Mammary epithelial cell (primary cell): ENCODE measurements at regions of chr5 and their contacts with region 1.

Region 1: GRCh38 chr5:176388444-176389134 is at the starts of genes HIGD2A and NOP16:
- DNase-seq: peak; percentile 98
- H3K4me3 ChIP-seq: peak within 1 kb of the TSS; percentile 67 to 79 (median 75)
- H3K27ac ChIP-seq: peak within 1 kb of the TSS; percentile 90
- H3K4me1 ChIP-seq: peaks cover 12% of the 10 kb centered on the region
- H3K27me3 ChIP-seq: no peaks in the 10 kb centered on the region
- CTCF ChIP-seq: no peak
- total RNA-seq, gene HIGD2A: 30.3 to 93.0 TPM
- total RNA-seq, gene NOP16: 8.7 to 61.4 TPM

Region 2: GRCh38 chr5:176361437-176362232 is 27.0 kb before region 1 on chr5 and contains the start of gene KIAA1191:
- CTCF ChIA-PET with region 1: no interaction called
- dilution Hi-C with region 1: no loop called
- in situ Hi-C with region 1: no loop called
- intact Hi-C with region 1: loop called (anchors 1 kb)
- DNase-seq: peak; percentile 86
- H3K4me3 ChIP-seq: peak within 1 kb of the TSS; percentile 80 to 100 (median 99)
- H3K27ac ChIP-seq: peak within 1 kb of the TSS; percentile 72
- H3K4me1 ChIP-seq: peaks cover 30% of the 10 kb centered on the region
- H3K27me3 ChIP-seq: no peaks in the 10 kb centered on the region
- CTCF ChIP-seq: peak in 1 of 2 donors; percentile 44
- total RNA-seq, gene KIAA1191: 99.0 to 204 TPM

Region 3: GRCh38 chr5:176410486-176411180 is 22.0 kb after region 1 on chr5:
- CTCF ChIA-PET with region 1: no interaction called
- dilution Hi-C with region 1: no loop called
- in situ Hi-C with region 1: no loop called
- intact Hi-C with region 1: loop called (anchors 1 kb)
- DNase-seq: peak; percentile 68
- H3K4me3 ChIP-seq: no peak overlapping the region
- H3K27ac ChIP-seq: no peak overlapping the region
- H3K4me1 ChIP-seq: peaks cover 51% of the 10 kb centered on the region
- H3K27me3 ChIP-seq: no peaks in the 10 kb centered on the region
- CTCF ChIP-seq: peak; percentile 17 to 39

Region 4: DNA sequence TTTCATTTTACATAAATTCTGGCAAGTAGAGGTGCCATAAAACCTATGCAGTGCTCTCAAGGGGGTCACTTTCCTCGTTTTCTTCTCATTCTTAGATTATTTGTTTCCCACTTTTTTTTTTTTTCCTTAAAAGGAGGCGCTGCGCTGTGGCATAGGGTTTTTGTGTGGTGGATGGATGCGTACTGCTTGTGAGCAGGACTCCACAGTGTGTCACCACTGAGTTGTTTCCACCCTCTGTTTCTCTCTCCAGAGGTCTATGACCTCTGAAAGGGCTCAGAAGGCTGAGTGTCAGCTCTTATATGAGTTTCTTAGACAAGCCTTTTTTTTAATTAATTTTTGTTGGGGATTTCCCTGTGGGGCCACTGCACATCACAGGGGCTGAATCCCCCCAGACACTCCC is 41.4 kb after region 1 on chr5:
- CTCF ChIA-PET with region 1: no interaction called
- dilution Hi-C with region 1: no loop called
- in situ Hi-C with region 1: no loop called
- intact Hi-C with region 1: no loop called
- DNase-seq: no peak
- H3K4me3 ChIP-seq: no peak overlapping the region
- H3K27ac ChIP-seq: no peak overlapping the region
- H3K4me1 ChIP-seq: no peaks in the 10 kb centered on the region
- H3K27me3 ChIP-seq: no peaks in the 10 kb centered on the region
- CTCF ChIP-seq: no peak